Activated CD4-positive, alpha-beta T cell treated with anti-CD3 and anti-CD28 coated beads, Interleukin-2, amount 10 ng/mL, durations not matched to agents 24 days and 14 days (primary cell): ENCODE measurements at regions of chr11 and their contacts with region 1.

Region 1: DNA sequence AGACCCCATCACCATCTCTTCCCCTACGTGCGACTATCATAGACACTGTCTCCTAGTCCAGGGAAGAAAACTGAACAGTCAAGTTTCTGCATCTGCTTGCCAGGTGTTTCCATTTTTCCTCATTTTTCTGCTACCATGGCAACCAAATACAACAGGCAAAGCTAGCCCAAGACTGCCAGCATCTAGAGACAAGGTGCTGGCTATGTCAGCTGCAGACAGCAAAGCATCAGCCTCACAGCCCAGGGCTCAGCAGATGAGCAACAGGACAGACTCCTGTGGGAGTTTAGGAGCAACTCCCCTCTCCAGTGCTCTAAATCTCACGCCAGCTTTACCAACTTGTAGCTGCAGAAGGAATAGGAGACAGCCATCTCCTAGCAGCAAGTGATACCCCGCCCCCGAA is 124.3 kb downstream of the C11orf58 start:
- DNase-seq: no peak
- H3K4me3 Mint-ChIP-seq: peak overlapping the region; percentile 6
- H3K27ac Mint-ChIP-seq: no peak overlapping the region
- H3K4me1 Mint-ChIP-seq: peaks cover 25% of the 10 kb centered on the region
- H3K27me3 Mint-ChIP-seq: no peaks in the 10 kb centered on the region

Region 2: DNA sequence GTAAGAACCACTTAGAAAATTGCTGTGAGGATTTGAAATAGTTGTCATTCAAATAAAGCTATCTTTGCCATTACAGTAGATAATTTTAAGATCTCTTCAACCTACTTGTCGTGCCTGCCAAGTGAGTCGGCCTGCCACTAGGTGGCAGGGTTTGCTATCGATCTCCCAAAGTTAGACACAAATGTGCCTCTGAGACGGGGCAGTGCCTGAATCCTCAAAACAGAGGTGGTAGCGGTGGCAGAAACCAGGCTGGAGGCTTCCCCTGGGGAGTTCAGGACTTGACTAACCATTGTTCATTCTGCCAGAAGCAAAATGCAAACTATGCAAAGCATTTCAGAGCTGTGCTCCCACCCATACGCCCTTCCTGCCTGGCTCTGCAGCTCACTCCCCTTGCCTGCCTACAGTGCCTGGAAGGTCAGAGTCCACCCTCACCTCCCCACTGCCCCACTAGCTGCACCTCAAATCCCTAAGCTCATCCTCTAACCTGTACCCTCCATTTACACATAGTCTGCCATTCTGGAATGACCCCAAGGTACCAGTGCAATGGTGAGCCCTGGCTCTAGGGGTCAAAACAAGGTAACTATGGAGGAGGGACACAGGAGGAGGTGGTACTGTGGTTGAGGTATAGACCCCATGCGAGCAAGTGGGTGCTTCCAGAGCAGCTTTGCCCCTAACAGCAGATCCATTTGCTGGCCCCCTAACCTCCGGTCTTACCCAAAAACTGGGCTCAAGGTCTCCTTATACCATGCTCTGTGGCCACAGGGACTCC is 42.2 kb before region 1 on chr11:
- intact Hi-C with region 1: loop called (anchors 5 kb)
- DNase-seq: peak; percentile 77
- H3K4me3 Mint-ChIP-seq: no peak overlapping the region
- H3K27ac Mint-ChIP-seq: no peak overlapping the region
- H3K4me1 Mint-ChIP-seq: peaks cover 10% of the 10 kb centered on the region
- H3K27me3 Mint-ChIP-seq: no peaks in the 10 kb centered on the region

Region 3: GRCh38 chr11:16909359-16910035 is 46.8 kb after region 1 on chr11:
- intact Hi-C with region 1: no loop called
- DNase-seq: peak; percentile 63
- H3K4me3 Mint-ChIP-seq: peak overlapping the region; percentile 36
- H3K27ac Mint-ChIP-seq: peak overlapping the region; percentile 90
- H3K4me1 Mint-ChIP-seq: peaks cover 28% of the 10 kb centered on the region
- H3K27me3 Mint-ChIP-seq: no peaks in the 10 kb centered on the region

Region 4: DNA sequence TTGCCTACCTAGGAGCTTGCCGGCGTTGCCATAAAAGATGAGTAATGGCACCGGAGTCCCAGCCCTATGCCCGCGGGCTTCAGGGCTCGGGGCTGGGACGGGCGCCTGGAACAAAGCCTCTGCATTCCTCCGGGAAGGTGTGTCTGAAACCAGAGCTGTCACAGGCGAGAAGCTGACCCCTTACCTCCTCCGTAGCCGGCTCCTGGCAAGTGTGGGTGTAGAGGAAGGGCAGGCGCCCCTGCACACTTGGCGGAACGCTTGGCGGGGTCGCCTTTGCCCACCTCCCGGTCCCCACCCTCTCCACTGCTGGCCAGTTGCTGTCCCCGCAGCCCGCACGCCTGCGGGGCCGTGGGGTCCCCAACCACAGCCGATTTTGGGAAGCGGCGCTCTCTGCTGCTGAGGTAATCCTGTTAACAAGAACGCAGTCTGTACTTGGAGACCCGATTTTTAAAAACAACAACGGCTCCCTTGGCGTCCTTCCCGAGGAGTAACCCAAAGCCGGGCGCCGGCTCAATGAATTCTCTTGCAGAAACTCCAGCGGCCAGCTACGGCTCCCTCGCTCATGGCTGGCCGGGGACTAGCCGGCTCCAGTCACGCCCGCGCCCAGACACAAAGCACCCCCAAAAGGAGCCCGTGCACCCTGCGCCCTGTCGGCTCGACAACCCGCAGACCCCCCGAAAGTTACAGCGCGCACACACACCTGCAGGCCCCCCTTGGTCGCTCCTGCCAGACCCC is 62.2 kb after region 1 on chr11:
- intact Hi-C with region 1: loop called (anchors 1 kb)
- DNase-seq: no peak
- H3K4me3 Mint-ChIP-seq: peak overlapping the region; percentile 89
- H3K27ac Mint-ChIP-seq: no peak overlapping the region
- H3K4me1 Mint-ChIP-seq: peaks cover 17% of the 10 kb centered on the region
- H3K27me3 Mint-ChIP-seq: peaks cover 46% of the 10 kb centered on the region

Region 5: DNA sequence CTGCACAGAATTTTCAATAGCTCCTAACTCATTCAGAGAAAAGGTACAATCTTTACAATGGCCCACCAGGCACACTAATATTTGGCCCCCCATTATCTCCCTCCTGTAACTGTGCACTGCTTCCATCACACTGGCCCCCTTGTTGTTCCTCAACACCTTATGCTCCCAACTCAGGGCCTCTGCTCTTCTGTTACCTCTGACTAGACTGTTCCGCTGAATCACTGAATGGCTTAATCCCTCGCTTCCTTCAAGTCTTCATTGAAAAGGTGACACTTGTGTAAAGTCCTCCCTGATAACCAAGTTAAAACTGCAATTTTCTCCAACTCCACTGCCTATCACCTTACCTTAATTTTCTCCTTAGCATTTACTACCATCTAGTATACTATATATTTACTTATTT is 323.2 kb after region 1 on chr11:
- intact Hi-C with region 1: no loop called
- DNase-seq: no peak
- H3K4me3 Mint-ChIP-seq: no peak overlapping the region
- H3K27ac Mint-ChIP-seq: no peak overlapping the region
- H3K4me1 Mint-ChIP-seq: peaks cover 5% of the 10 kb centered on the region
- H3K27me3 Mint-ChIP-seq: no peaks in the 10 kb centered on the region